ENCODE measurements at regions of chr2 and their contacts with region 1.

Region 1: GRCh38 chr2:174158003-174158402 is 90.3 kb downstream of the OLA1 start:
- DNase-seq: no peak
- H3K4me3 Mint-ChIP-seq: no peak overlapping the region
- H3K27ac Mint-ChIP-seq: no peak overlapping the region
- H3K4me1 Mint-ChIP-seq: peaks cover 17% of the 10 kb centered on the region
- H3K27me3 Mint-ChIP-seq: no peaks in the 10 kb centered on the region

Region 2: DNA sequence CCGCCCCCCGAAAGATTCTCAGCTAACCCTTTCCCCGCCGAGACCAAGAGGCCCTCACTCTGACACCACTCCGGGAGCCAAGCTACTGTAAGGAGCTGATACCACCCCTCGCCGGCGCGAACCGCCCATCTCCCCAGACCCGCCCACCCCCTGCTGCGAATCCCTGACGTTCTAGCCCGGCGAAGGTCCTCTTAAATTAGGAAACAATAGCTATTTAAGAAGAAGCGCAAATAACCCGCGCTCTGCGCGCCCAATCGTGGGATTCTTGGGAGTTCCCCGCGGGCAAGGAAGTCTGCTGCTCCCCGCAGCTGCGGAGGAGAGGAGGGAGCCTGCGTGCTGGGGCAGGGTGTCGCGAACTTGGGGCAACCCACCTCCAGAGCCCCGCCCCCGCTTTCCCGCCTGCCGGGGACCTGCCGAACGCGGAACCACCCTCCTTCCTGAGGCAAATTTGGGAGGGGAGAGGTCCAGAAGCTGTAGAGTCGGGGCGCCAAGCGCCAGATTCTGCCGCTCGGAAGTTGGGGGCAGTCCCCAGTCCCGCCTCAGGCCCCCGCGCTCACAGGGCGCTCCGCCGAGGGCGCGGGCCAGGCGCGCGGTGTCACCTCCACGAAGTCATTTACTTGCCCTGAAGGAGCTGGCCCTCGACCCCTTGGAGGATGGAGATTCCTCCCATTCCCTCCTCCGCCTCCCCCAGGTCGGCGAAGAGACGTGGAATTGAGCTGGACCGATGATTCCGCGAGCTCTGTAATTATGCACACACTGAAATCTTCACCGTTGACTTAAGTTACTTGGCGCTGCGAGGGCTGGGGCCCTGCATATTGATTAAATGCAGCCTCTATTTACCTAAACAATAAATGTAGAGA is 168.4 kb after region 1 on chr2:
- intact Hi-C with region 1: loop called (anchors 5 kb)
- DNase-seq: no peak
- H3K4me3 Mint-ChIP-seq: peak overlapping the region; percentile 77
- H3K27ac Mint-ChIP-seq: peak overlapping the region; percentile 35
- H3K4me1 Mint-ChIP-seq: peaks cover 15% of the 10 kb centered on the region
- H3K27me3 Mint-ChIP-seq: peaks cover 88% of the 10 kb centered on the region

Measured in activated T-helper 1 cell treated with anti-CD3 and anti-CD28 coated beads, Interleukin-12 subunit alpha, Interleukin-12 subunit beta, Interleukin-2, Interleukin-4 antibody, amounts not matched to agents 30 ng/mL and 10 ng/mL and 1 ng/mL, durations not matched to agents 14 hours and 24 hours and 36 hours (primary cell).